ENCODE measurements at regions of chr1 and their contacts with region 1.

Region 1: GRCh38 chr1:157490467-157491165 is 61.7 kb downstream of the FCRL5 start:
- DNase-seq: peak; percentile 71 to 79
- H3K4me3 ChIP-seq: no peak overlapping the region
- H3K4me3 Mint-ChIP-seq: no peak overlapping the region
- H3K27ac Mint-ChIP-seq: no peak overlapping the region
- H3K4me1 ChIP-seq: peaks cover under 1% of the 10 kb centered on the region; the same call in 1 of the 2 replicates
- H3K4me1 Mint-ChIP-seq: peaks cover 21% of the 10 kb centered on the region
- H3K27me3 ChIP-seq: no peaks in the 10 kb centered on the region
- H3K27me3 Mint-ChIP-seq: no peaks in the 10 kb centered on the region
- CTCF ChIP-seq: peak; percentile 65 to 75

Region 2: DNA sequence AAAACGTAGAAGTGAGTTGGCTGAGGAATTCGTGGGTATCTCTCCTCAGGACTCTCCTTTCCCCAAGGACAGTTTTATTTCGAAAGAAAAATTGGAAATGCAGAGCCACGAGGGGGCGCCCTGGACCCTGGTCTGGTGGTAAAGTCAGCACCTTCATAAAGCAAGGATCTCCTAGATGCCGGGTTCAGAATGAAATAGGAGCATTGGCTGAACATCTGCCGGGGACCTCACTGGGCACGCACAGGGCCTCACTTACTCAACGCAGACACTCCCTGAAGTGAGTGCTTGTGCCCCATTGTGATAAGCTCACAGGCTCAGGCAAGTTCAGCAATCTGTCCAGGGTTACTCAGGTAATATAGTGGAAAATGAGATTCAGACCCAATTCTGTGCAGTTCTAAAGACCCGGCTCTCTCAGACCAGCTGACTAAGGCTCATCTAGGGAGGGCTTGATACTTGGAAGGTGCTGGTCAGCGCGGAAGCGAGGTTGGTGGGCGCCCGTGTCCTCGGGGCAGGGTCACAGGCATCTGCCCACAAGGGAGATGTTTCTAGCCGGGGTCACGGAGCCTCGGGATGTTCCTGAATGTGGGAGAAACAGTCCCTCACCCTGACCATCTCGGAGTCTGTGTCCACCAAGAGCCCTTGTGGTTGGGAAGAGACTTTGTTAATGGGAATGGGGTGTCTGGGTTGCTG is 296.8 kb before region 1 on chr1:
- CTCF ChIA-PET with region 1: interaction called, 3 read pairs
- POLR2A ChIA-PET with region 1: no interaction called
- intact Hi-C with region 1: loop called (anchors 1 kb)
- DNase-seq: peak; percentile 80 to 85
- H3K4me3 ChIP-seq: no peak overlapping the region
- H3K4me3 Mint-ChIP-seq: no peak overlapping the region
- H3K27ac Mint-ChIP-seq: no peak overlapping the region
- H3K4me1 ChIP-seq: peaks cover 8% of the 10 kb centered on the region; the same call in 1 of the 2 replicates
- H3K4me1 Mint-ChIP-seq: no peaks in the 10 kb centered on the region
- H3K27me3 ChIP-seq: no peaks in the 10 kb centered on the region
- H3K27me3 Mint-ChIP-seq: no peaks in the 10 kb centered on the region
- CTCF ChIP-seq: peak; percentile 79 to 84

Region 3: DNA sequence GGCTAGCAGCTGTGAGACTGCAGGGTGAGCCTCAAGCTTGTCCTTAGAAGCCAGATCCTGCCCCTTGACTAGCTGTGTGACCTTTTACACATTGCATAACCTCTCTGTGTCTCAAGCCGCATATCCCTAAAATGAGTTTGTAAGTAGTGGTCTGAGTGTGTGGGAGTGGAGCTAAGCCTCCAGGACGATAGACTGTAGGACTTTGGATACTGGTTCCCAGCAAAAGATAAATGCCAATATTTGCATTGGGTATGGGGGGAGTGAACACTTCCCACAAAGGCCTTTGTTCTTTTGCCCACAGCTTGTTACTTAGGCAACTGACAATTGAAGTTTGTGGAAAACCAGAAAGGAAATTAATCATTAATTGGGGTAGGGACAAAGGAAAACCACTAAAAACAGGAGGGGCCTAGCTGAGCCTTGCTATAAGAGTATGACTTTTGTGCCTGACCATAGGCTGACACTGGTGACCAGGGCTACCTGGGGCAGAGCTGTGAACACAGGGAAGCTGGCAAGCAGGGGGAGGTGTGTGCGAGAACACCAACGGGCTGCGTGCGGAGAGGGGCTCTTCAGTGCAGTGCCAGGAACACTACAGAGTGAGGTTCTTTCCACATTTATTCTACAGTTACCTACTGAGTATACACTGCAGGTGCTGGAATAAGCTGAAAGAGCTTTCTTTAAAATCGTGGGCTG is 250.0 kb before region 1 on chr1:
- CTCF ChIA-PET with region 1: no interaction called
- POLR2A ChIA-PET with region 1: no interaction called
- intact Hi-C with region 1: loop called (anchors 1 kb)
- DNase-seq: peak; percentile 84 to 88
- H3K4me3 ChIP-seq: no peak overlapping the region
- H3K4me3 Mint-ChIP-seq: peak overlapping the region; percentile 36
- H3K27ac Mint-ChIP-seq: peak overlapping the region; percentile 91
- H3K4me1 ChIP-seq: peaks cover 50% of the 10 kb centered on the region
- H3K4me1 Mint-ChIP-seq: peaks cover 43% of the 10 kb centered on the region
- H3K27me3 ChIP-seq: no peaks in the 10 kb centered on the region
- H3K27me3 Mint-ChIP-seq: no peaks in the 10 kb centered on the region
- CTCF ChIP-seq: no peak

Region 4: DNA sequence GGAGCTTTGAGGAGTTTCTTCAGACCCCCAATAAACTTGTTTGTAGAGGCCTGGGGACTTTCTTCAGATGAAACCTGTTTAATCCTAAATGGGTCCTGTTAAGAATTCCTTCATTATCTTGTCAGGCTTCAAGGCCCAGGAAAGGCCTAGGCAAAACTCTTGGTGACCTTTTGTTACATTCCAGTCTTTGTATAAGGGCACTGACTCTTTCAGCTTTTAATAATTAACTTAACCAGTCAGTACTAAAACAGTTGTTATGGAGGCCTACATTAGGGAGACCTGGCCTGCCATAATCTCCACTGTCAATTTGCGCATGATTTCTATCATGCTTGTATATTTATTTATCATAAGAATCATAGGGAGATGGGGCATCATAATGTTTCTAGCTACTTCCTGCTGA is 48.6 kb before region 1 on chr1:
- CTCF ChIA-PET with region 1: no interaction called
- POLR2A ChIA-PET with region 1: no interaction called
- intact Hi-C with region 1: loop called (anchors 1 kb)
- DNase-seq: peak; percentile 72 to 75
- H3K4me3 ChIP-seq: no peak overlapping the region
- H3K4me3 Mint-ChIP-seq: peak overlapping the region; percentile 48
- H3K27ac Mint-ChIP-seq: peak overlapping the region; percentile 79
- H3K4me1 ChIP-seq: peaks cover 51% of the 10 kb centered on the region
- H3K4me1 Mint-ChIP-seq: peaks cover 24% of the 10 kb centered on the region
- H3K27me3 ChIP-seq: no peaks in the 10 kb centered on the region
- H3K27me3 Mint-ChIP-seq: no peaks in the 10 kb centered on the region
- CTCF ChIP-seq: no peak

Region 5: GRCh38 chr1:157505481-157506272 is 15.1 kb after region 1 on chr1:
- CTCF ChIA-PET with region 1: interaction called, 3 read pairs
- POLR2A ChIA-PET with region 1: no interaction called
- intact Hi-C with region 1: loop called (anchors 1 kb)
- DNase-seq: peak; percentile 63 to 73
- H3K4me3 ChIP-seq: no peak overlapping the region
- H3K4me3 Mint-ChIP-seq: no peak overlapping the region
- H3K27ac Mint-ChIP-seq: no peak overlapping the region
- H3K4me1 ChIP-seq: peaks cover 26% of the 10 kb centered on the region
- H3K4me1 Mint-ChIP-seq: peaks cover 14% of the 10 kb centered on the region
- H3K27me3 ChIP-seq: no peaks in the 10 kb centered on the region
- H3K27me3 Mint-ChIP-seq: no peaks in the 10 kb centered on the region
- CTCF ChIP-seq: peak; percentile 65 to 84